ENCODE measurements at regions of chr18 and their contacts with region 1.

Region 1: DNA sequence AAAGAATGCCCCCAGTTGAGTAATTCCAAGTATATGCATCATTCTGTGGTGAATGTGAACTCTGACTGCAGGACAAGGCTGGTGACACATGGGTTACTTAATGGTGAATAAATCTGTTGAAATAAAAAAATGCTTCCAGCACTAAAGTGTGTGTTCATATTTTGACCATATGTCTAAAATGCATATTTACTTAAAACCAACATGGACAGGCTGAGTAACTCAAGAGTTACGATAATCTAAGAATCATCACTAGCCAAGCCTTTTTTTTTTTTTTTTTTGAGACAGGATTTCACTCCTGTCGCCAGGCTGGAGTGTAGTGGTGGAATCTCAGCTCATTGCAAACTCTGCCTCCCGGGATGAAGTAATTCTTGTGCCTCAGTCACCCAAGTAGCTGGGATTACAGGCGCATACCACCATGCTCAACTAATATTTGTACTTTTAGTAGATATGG is 47.1 kb upstream of the CCBE1 start:
- DNase-seq: peak in 1 of 2 experiments; percentile 54
- ATAC-seq: peak; percentile 84 to 86
- H3K4me3 ChIP-seq: no peak overlapping the region
- H3K27ac ChIP-seq: peak overlapping the region; percentile 62 to 87
- H3K4me1 ChIP-seq: peaks cover 25% of the 10 kb centered on the region; the same call in 2 of the 3 replicates
- CTCF ChIP-seq: no peak
- EP300 ChIP-seq: peak; percentile 50 to 75; a peak in 2 of 5 replicates
- POLR2A ChIP-seq: no peak
- RAD21 ChIP-seq: 0 out of 5 replicates have a peak, but pooled peaks of 1 of the 2 experiments have one; percentile 11

Region 2: DNA sequence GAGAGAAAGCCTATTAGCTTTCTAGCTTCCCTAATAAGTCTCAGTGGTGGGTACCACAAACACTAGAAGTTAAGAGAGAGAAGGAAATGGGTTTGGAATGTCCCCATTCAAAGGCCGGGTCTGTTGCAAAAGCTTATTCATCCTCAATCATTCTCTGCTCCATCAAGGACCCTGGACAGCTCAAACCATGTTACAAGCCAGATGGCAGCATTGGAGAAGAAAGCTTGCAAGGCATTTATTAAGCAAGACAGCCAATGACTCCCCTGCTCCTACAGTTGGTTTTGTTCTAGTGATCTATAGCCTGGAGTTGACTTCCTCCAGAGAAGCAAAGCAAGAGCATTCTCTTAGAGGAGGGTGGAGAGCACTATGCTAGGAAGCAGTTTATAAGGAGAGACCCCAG is 298.3 kb before region 1 on chr18:
- CTCF ChIA-PET with region 1: no interaction called
- POLR2A ChIA-PET with region 1: no interaction called
- DNase-seq: no peak
- ATAC-seq: no peak
- H3K4me3 ChIP-seq: no peak overlapping the region
- H3K27ac ChIP-seq: no peak overlapping the region
- H3K4me1 ChIP-seq: no peaks in the 10 kb centered on the region
- CTCF ChIP-seq: no peak
- EP300 ChIP-seq: no peak
- POLR2A ChIP-seq: no peak
- RAD21 ChIP-seq: no peak

Region 3: DNA sequence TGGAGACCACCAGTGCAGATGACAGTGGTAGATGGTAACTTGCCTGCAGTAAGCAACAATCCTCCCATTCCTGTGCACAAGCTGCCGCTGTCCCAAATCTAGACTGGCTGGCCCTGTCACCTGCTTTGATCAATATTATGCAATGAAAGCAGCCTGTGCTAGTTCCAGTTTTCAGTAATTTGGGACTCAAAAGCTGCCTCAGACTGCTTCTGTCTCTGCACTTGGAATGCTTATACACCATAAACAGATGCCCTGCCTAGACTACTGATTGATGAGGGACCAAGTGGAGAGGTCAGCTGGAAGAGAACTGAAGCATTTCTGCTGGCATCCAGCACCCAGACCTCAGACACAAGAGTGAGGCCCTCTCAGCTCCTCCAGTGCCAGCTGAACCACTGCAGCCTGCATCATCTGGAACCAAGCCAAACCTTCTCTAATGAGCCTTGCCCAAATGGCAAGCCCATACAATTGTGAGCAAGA is 72.0 kb before region 1 on chr18:
- CTCF ChIA-PET with region 1: no interaction called
- POLR2A ChIA-PET with region 1: no interaction called
- DNase-seq: no peak
- ATAC-seq: no peak
- H3K4me3 ChIP-seq: no peak overlapping the region
- H3K27ac ChIP-seq: no peak overlapping the region
- H3K4me1 ChIP-seq: no peaks in the 10 kb centered on the region
- CTCF ChIP-seq: no peak
- EP300 ChIP-seq: no peak
- POLR2A ChIP-seq: no peak
- RAD21 ChIP-seq: no peak

Region 4: DNA sequence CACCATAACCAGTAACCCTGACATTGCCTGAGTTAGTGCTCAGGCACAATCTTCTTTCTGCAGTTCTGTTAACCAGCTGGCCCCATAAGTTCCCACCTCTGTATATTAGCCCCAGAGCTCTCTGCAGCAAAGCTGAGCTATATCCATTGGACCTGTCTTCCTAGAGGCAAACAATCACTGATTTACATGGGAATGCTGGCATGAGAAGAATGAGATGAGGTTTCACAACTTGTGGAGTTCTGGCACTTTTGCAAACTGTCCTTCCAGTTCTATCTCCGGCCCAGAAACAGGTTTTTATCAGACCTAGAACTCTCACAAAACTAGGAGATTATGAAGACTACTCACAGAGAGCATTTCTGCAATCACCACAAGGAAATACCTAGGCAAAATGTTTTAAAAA is 39.2 kb before region 1 on chr18:
- CTCF ChIA-PET with region 1: no interaction called
- POLR2A ChIA-PET with region 1: no interaction called
- DNase-seq: no peak
- ATAC-seq: no peak
- H3K4me3 ChIP-seq: no peak overlapping the region
- H3K27ac ChIP-seq: no peak overlapping the region
- H3K4me1 ChIP-seq: no peaks in the 10 kb centered on the region
- CTCF ChIP-seq: no peak
- EP300 ChIP-seq: no peak
- POLR2A ChIP-seq: no peak
- RAD21 ChIP-seq: no peak

Region 5: DNA sequence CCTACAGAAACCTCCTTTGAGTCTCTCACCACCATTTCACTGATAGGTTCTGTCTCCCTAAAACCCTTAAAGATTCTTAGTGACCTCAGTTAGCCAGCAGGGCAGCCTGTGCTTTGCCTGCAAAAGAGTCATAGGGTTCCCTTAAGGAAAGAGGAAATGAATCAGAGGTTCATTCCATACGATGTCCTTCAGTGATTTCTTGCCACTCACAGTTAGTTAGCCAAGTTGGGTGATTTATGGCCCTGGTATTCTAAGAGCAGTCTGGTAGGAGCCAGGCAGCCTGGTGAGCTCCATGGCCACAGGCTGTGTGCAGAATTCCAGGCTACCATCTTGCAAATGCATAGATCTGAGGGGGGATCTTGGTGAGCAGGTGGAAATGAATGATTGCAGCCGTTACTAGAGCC is 28.3 kb before region 1 on chr18:
- CTCF ChIA-PET with region 1: interaction called, 10 read pairs
- POLR2A ChIA-PET with region 1: interaction called, 5 read pairs
- DNase-seq: peak; percentile 40 to 70
- ATAC-seq: peak; percentile 81 to 86
- H3K4me3 ChIP-seq: no peak overlapping the region
- H3K27ac ChIP-seq: peak overlapping the region; percentile 70 to 86
- H3K4me1 ChIP-seq: peaks cover 39% of the 10 kb centered on the region
- CTCF ChIP-seq: no peak
- EP300 ChIP-seq: peak in 1 of 2 experiments; percentile 51; a peak in 1 of 5 replicates
- POLR2A ChIP-seq: no peak
- RAD21 ChIP-seq: no peak

Region 6: GRCh38 chr18:59733421-59733820 is 10.9 kb before region 1 on chr18:
- CTCF ChIA-PET with region 1: no interaction called
- POLR2A ChIA-PET with region 1: no interaction called
- DNase-seq: no peak
- ATAC-seq: no peak
- H3K4me3 ChIP-seq: no peak overlapping the region
- H3K27ac ChIP-seq: no peak overlapping the region; a peak in 1 of 6 replicates
- H3K4me1 ChIP-seq: peaks cover 6% of the 10 kb centered on the region; the same call in 1 of the 3 replicates
- CTCF ChIP-seq: no peak
- EP300 ChIP-seq: no peak
- POLR2A ChIP-seq: no peak
- RAD21 ChIP-seq: no peak